Activated CD8-positive, alpha-beta T cell treated with anti-CD3 and anti-CD28 coated beads, Interleukin-2, amount 10 ng/mL, durations not matched to agents 7 days and 5 days (primary cell): ENCODE measurements at regions of chr1 and their contacts with region 1.

Region 1: GRCh38 chr1:230120926-230121381 is 53.9 kb downstream of the GALNT2 start:
- DNase-seq: no peak
- ATAC-seq: no peak
- H3K4me3 Mint-ChIP-seq: no peak overlapping the region
- H3K27ac Mint-ChIP-seq: no peak overlapping the region
- H3K4me1 Mint-ChIP-seq: peaks cover 54% of the 10 kb centered on the region
- H3K27me3 Mint-ChIP-seq: no peaks in the 10 kb centered on the region

Region 2: GRCh38 chr1:230037261-230037660 is 83.7 kb before region 1 on chr1:
- CTCF ChIA-PET with region 1: no interaction called
- POLR2A ChIA-PET with region 1: no interaction called
- DNase-seq: no peak
- ATAC-seq: no peak
- H3K4me3 Mint-ChIP-seq: no peak overlapping the region
- H3K27ac Mint-ChIP-seq: no peak overlapping the region
- H3K4me1 Mint-ChIP-seq: no peaks in the 10 kb centered on the region
- H3K27me3 Mint-ChIP-seq: peaks cover 3% of the 10 kb centered on the region

Region 3: GRCh38 chr1:230104395-230105244 is 16.3 kb before region 1 on chr1:
- CTCF ChIA-PET with region 1: interaction called, 16 read pairs
- POLR2A ChIA-PET with region 1: interaction called, 3 read pairs
- DNase-seq: peak; percentile 68
- ATAC-seq: peak; percentile 67
- H3K4me3 Mint-ChIP-seq: peak overlapping the region; percentile 8
- H3K27ac Mint-ChIP-seq: peak overlapping the region; percentile 68
- H3K4me1 Mint-ChIP-seq: peaks cover 72% of the 10 kb centered on the region
- H3K27me3 Mint-ChIP-seq: no peaks in the 10 kb centered on the region

Region 4: DNA sequence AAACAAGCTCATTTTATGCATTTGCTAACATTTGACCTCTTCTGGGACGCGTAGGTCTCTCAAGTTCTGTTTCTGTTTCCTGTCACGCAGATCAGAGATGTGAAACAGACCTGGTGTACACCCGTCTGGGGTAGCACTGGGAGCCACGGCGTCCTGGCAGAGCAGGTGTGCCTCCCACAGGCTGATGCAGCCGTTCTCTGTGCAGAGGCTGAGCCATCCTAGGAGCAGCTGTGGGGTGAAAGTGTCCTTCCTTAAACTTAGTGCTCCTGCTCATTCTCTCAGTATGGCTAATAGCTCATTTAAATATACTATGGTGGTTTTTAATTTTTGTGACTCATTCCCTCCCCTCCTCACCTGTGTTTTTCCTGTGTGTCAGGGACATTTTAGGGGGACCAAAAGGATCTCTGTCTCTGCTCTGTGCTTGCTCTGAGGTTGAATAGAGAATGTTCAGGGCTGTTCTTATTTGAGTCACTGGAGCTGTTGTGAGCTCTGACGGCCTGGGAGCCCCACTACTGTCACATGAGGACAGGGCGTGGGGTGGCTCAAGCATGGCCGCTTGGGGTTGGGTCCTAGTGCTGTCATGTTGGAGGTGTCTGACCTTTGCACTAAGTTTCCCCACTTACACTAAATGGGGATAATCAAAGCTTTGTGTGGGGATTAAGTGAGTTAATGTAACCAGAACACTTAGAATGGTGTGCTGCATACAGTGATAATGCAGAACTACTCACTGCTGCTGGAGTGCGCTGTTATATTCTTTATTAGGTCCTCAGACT is 10.9 kb before region 1 on chr1:
- CTCF ChIA-PET with region 1: interaction called, 21 read pairs
- POLR2A ChIA-PET with region 1: interaction called, 3 read pairs
- DNase-seq: peak; percentile 70
- ATAC-seq: peak; percentile 90
- H3K4me3 Mint-ChIP-seq: no peak overlapping the region
- H3K27ac Mint-ChIP-seq: peak overlapping the region; percentile 47
- H3K4me1 Mint-ChIP-seq: peaks cover 70% of the 10 kb centered on the region
- H3K27me3 Mint-ChIP-seq: no peaks in the 10 kb centered on the region